Breast epithelium (tissue), 4 donors: ENCODE measurements at regions of chrX and their contacts with region 1.

Region 1: DNA sequence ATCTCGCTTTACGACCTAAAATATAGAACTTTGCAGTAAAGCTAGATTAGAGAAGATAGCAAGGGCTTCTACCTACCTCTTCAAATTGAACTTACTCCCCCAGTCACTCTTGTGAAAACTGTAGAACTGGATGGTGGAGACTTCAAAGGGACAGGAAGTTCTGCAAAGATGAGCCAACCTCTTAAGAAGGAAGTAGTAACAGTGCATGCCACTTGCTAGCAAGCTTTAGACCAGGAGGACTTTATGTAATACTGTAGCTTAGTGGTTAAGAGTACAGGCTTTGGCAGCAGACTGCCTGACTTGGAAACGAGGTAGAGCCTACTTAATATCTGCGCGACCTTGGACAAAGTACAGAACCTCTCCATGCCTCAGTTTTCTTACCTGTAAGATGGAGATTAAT is 27.5 kb upstream of the VBP1 start:
- DNase-seq: no peak
- H3K4me3 ChIP-seq: no peak overlapping the region
- H3K27ac ChIP-seq: no peak overlapping the region
- H3K4me1 ChIP-seq: no peaks in the 10 kb centered on the region
- H3K27me3 ChIP-seq: no peaks in the 10 kb centered on the region
- CTCF ChIP-seq: no peak
- POLR2A ChIP-seq: no peak

Region 2: DNA sequence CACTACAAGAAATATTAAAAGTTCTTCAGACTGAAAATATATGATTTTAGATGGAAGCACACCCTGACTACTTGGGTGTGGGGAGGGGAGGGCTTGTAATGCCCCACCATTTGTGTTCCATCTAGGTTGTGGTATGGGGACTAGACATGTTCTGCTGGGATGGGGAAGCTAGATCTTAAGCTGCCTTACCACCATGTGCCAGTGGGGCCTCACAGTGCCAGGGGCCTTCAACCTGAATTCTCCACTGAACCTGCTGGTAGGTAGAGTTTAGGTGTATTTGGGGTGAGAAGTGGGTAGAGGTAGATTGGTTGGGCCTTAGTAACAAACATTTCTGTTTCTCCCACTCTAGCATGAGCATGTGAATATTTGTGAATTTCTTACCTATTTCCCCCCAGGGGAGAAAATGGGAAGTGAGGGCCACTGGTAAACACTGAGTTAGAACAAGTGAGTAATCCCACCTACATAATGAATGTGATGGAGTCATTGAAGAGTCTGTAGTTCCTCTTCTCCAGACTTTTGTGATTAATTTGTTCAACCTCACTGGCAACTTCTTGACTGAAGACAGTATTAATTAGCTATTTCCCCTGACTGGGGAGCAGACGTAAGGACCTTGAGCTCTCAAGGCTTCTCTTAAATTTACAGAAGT is 73.5 kb before region 1 on chrX:
- intact Hi-C with region 1: no loop called
- DNase-seq: no peak
- H3K4me3 ChIP-seq: no peak overlapping the region
- H3K27ac ChIP-seq: no peak overlapping the region
- H3K4me1 ChIP-seq: no peaks in the 10 kb centered on the region
- H3K27me3 ChIP-seq: no peaks in the 10 kb centered on the region
- CTCF ChIP-seq: no peak
- POLR2A ChIP-seq: no peak

Region 3: GRCh38 chrX:155235888-155236413 is 47.2 kb after region 1 on chrX:
- intact Hi-C with region 1: loop called (anchors 2 kb)
- DNase-seq: no peak
- H3K4me3 ChIP-seq: no peak overlapping the region
- H3K27ac ChIP-seq: no peak overlapping the region
- H3K4me1 ChIP-seq: no peaks in the 10 kb centered on the region
- H3K27me3 ChIP-seq: no peaks in the 10 kb centered on the region
- CTCF ChIP-seq: no peak
- POLR2A ChIP-seq: no peak